ENCODE measurements at regions of chr13 and their contacts with region 1.

Region 1: DNA sequence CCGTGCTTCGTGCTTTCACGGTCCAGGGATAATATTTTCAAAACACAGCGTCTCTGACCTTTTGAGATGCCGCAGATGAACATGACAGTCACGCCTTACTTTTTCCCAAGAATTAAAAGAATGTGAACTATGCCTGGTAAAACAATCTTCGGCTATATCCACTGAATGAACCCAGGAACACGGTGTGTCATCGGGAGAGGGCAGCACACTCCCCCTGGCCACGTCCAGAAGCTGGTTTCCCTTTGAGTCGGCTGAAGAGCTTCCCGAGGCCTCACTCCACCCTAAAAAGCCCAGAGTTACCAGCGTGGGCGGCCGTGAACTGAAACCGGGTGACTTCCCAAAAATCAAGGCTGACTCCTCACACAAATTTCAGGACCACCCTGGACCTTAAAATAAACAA is 22.9 kb upstream of the SHISA2 start:
- DNase-seq: no peak
- H3K4me3 Mint-ChIP-seq: no peak overlapping the region
- H3K27ac Mint-ChIP-seq: no peak overlapping the region
- H3K4me1 Mint-ChIP-seq: no peaks in the 10 kb centered on the region
- H3K27me3 Mint-ChIP-seq: peaks cover 22% of the 10 kb centered on the region

Region 2: GRCh38 chr13:25827831-25828465 is 246.8 kb before region 1 on chr13:
- CTCF ChIA-PET with region 1: interaction called, 3 read pairs
- intact Hi-C with region 1: loop called (anchors 1 kb)
- DNase-seq: no peak
- H3K4me3 Mint-ChIP-seq: no peak overlapping the region
- H3K27ac Mint-ChIP-seq: no peak overlapping the region
- H3K4me1 Mint-ChIP-seq: no peaks in the 10 kb centered on the region
- H3K27me3 Mint-ChIP-seq: no peaks in the 10 kb centered on the region

Region 3: GRCh38 chr13:26112843-26113242 is 38.1 kb after region 1 on chr13:
- CTCF ChIA-PET with region 1: no interaction called
- intact Hi-C with region 1: no loop called
- DNase-seq: no peak
- H3K4me3 Mint-ChIP-seq: no peak overlapping the region
- H3K27ac Mint-ChIP-seq: no peak overlapping the region
- H3K4me1 Mint-ChIP-seq: no peaks in the 10 kb centered on the region
- H3K27me3 Mint-ChIP-seq: peaks cover 6% of the 10 kb centered on the region

Measured in activated naive CD4-positive, alpha-beta T cell treated with anti-CD3 and anti-CD28 coated beads for 36 hours (primary cell).